Naive thymus-derived CD4-positive, alpha-beta T cell (primary cell): ENCODE measurements at regions of chr7 and their contacts with region 1.

Region 1: GRCh38 chr7:73718905-73719805 is at the start of gene STX1A:
- DNase-seq: peak; percentile 57 to 83 (median 69)
- ATAC-seq: peak; percentile 87
- H3K4me3 ChIP-seq: peak within 1 kb of the TSS; percentile 68
- H3K4me3 Mint-ChIP-seq: peak within 1 kb of the TSS; percentile 72 to 92 (median 84)
- H3K27ac ChIP-seq: peak within 1 kb of the TSS; percentile 71
- H3K27ac Mint-ChIP-seq: peak within 1 kb of the TSS in 8 of 9 donors; percentile 14 to 87 (median 81)
- H3K4me1 ChIP-seq: peaks cover 16 to 22% of the 10 kb centered on the region in 2 donors
- H3K4me1 Mint-ChIP-seq: peaks cover 8 to 32% (median 17%) of the 10 kb centered on the region in 7 donors
- H3K27me3 ChIP-seq: no peaks in the 10 kb centered on the region
- H3K27me3 Mint-ChIP-seq: peaks cover 0 to 24% (median 5%) of the 10 kb centered on the region in 5 donors
- total RNA-seq, gene STX1A: 9.6 to 13.4 (median 10.5) TPM

Region 2: DNA sequence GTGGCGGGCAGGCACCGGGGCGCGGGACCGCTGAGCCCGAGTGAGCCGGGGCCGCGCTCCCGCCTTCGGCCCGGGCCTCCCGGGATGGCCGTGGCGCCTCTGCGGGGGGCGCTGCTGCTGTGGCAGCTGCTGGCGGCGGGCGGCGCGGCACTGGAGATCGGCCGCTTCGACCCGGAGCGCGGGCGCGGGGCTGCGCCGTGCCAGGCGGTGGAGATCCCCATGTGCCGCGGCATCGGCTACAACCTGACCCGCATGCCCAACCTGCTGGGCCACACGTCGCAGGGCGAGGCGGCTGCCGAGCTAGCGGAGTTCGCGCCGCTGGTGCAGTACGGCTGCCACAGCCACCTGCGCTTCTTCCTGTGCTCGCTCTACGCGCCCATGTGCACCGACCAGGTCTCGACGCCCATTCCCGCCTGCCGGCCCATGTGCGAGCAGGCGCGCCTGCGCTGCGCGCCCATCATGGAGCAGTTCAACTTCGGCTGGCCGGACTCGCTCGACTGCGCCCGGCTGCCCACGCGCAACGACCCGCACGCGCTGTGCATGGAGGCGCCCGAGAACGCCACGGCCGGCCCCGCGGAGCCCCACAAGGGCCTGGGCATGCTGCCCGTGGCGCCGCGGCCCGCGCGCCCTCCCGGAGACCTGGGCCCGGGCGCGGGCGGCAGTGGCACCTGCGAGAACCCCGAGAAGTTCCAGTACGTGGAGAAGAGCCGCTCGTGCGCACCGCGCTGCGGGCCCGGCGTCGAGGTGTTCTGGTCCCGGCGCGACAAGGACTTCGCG is 285.0 kb before region 1 on chr7:
- CTCF ChIA-PET with region 1: no interaction called
- POLR2A ChIA-PET with region 1: no interaction called
- intact Hi-C with region 1: loop called in 1 of 2 experiments (anchors 10 kb)
- DNase-seq: peak in 1 of 9 donors; percentile 37
- ATAC-seq: peak; percentile 34
- H3K4me3 ChIP-seq: no peak overlapping the region
- H3K4me3 Mint-ChIP-seq: peak overlapping the region in 9 of 10 donors; percentile 28 to 78 (median 62)
- H3K27ac ChIP-seq: no peak overlapping the region
- H3K27ac Mint-ChIP-seq: no peak overlapping the region
- H3K4me1 ChIP-seq: no peaks in the 10 kb centered on the region
- H3K4me1 Mint-ChIP-seq: peaks cover 5 to 15% (median 10%) of the 10 kb centered on the region in 7 donors
- H3K27me3 ChIP-seq: no peaks in the 10 kb centered on the region
- H3K27me3 Mint-ChIP-seq: peaks cover 0 to 4% (median 0%) of the 10 kb centered on the region in 5 donors

Region 3: DNA sequence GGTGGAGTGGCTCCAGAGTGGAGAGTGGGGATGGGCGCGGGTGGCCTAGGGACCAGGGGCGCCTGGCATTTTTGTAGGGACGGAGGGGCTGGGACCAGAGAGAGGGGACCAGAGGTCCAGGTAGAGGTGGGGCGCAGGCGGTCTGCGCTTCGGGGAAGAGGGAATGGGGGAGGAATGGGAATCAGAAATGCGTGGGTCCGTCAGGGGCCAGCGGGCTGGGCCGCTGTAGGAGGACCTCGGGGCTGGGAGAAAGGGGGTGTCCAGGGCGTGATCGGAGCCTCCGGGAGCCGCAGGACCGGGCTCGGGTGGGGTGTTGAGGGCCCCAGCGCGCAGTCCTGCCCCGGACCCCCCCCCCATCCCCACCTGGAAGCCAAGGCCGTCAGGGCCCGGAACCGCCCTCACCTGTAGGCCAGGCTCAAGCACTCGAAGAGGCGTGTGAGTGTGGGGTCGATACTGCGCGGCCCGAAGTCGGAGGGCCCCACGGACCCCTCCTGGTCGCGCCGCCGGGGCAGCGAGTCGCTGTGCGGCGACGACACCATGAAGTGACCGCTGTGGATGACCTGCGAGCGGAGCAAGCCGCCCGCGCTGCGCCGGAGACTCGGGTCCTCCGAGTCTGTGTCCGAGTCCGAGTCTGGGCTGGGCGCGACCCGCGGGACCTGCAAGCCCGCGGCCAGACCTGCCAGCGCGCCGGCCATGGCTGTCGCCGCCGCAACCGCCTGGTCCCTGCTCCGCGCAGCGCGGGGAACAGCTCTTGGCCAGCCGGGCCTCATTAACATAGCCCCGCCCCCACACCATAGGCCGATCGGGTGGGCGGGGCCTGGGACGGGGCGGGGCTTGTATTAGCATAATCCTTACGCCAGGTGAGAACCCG is 95.1 kb before region 1 on chr7 and contains the start of gene MLXIPL:
- CTCF ChIA-PET with region 1: no interaction called
- POLR2A ChIA-PET with region 1: no interaction called
- intact Hi-C with region 1: loop called in 1 of 2 experiments (anchors 5 kb)
- DNase-seq: peak in 7 of 9 donors; percentile 16 to 68 (median 30)
- ATAC-seq: peak; percentile 89
- H3K4me3 ChIP-seq: no peak within 1 kb of the TSS
- H3K4me3 Mint-ChIP-seq: peak within 1 kb of the TSS; percentile 25 to 78 (median 60)
- H3K27ac ChIP-seq: no peak within 1 kb of the TSS
- H3K27ac Mint-ChIP-seq: peak within 1 kb of the TSS in 1 of 9 donors; percentile 50
- H3K4me1 ChIP-seq: no peaks in the 10 kb centered on the region
- H3K4me1 Mint-ChIP-seq: peaks cover 0 to 9% (median 5%) of the 10 kb centered on the region in 7 donors
- H3K27me3 ChIP-seq: peaks cover 0 to 10% of the 10 kb centered on the region in 2 donors
- H3K27me3 Mint-ChIP-seq: peaks cover 38 to 74% (median 44%) of the 10 kb centered on the region in 5 donors
- total RNA-seq, gene MLXIPL: not detected

Region 4: DNA sequence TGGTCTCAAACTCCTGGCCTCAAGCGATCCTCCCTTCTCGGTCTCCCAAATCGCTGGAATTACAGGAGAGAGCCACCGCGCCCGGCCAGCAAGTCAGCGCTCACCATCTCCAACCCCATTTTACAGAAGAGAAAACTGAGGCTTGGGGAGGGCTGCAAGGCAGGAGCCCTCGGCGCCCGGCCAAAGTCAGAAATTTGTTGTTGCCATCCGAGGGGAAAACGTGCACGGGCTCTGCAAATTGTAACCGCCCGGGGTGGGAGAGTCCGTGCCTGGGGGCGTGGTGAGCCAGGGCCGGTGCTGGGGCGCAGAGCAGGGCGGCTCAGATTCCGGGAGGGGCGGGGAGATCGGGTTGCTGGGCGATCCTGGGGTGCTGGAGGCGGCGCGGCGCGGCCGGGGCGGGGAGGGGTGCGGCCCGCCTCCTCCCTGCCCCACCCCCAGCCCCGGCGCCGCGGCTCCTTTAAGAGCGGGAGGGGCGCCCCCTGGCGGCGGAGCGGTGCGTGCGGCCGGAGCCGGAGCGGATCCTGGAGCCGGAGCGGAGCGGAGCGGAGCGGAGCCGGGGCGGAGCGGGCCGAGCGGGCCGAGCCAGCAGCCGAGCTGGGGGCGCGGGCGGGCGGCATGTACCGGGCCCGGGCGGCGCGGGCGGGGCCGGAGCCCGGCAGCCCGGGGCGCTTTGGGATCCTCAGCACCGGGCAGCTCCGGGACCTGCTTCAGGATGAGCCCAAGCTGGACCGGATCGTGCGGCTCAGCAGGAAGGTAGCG is 51.6 kb before region 1 on chr7 and contains the start of gene VPS37D:
- CTCF ChIA-PET with region 1: no interaction called
- POLR2A ChIA-PET with region 1: no interaction called
- intact Hi-C with region 1: loop called (anchors 1 kb)
- DNase-seq: peak; percentile 84 to 99 (median 93)
- ATAC-seq: peak; percentile 98
- H3K4me3 ChIP-seq: peak within 1 kb of the TSS; percentile 44
- H3K4me3 Mint-ChIP-seq: peak within 1 kb of the TSS; percentile 61 to 84 (median 76)
- H3K27ac ChIP-seq: no peak within 1 kb of the TSS
- H3K27ac Mint-ChIP-seq: peak within 1 kb of the TSS in 5 of 9 donors; percentile 22 to 67 (median 49)
- H3K4me1 ChIP-seq: peaks cover 5 to 6% of the 10 kb centered on the region in 2 donors
- H3K4me1 Mint-ChIP-seq: peaks cover 0 to 15% (median 8%) of the 10 kb centered on the region in 7 donors
- H3K27me3 ChIP-seq: no peaks in the 10 kb centered on the region
- H3K27me3 Mint-ChIP-seq: peaks cover 27 to 58% (median 33%) of the 10 kb centered on the region in 5 donors
- total RNA-seq, gene VPS37D: 0.22 to 0.85 (median 0.44) TPM in 3 of 5 experiments, not detected in the others

Region 5: GRCh38 chr7:73683056-73683964 is 35.8 kb before region 1 on chr7 and contains the starts of genes BUD23 and DNAJC30:
- CTCF ChIA-PET with region 1: no interaction called
- POLR2A ChIA-PET with region 1: no interaction called
- intact Hi-C with region 1: loop called (anchors 1 to 2 kb)
- DNase-seq: peak; percentile 77 to 97 (median 88)
- ATAC-seq: peak; percentile 98
- H3K4me3 ChIP-seq: peak within 1 kb of the TSS; percentile 97
- H3K4me3 Mint-ChIP-seq: peak within 1 kb of the TSS; percentile 91 to 98 (median 96)
- H3K27ac ChIP-seq: peak within 1 kb of the TSS; percentile 91
- H3K27ac Mint-ChIP-seq: peak within 1 kb of the TSS; percentile 91 to 97 (median 95)
- H3K4me1 ChIP-seq: peaks cover 17% of the 10 kb centered on the region in 2 donors
- H3K4me1 Mint-ChIP-seq: peaks cover 17 to 62% (median 42%) of the 10 kb centered on the region in 7 donors
- H3K27me3 ChIP-seq: no peaks in the 10 kb centered on the region
- H3K27me3 Mint-ChIP-seq: no peaks in the 10 kb centered on the region
- total RNA-seq, gene BUD23: 50.5 to 107 (median 72.0) TPM
- total RNA-seq, gene DNAJC30: 9.5 to 22.4 (median 13.4) TPM

Region 6: GRCh38 chr7:73703757-73704639 is 15.2 kb before region 1 on chr7:
- CTCF ChIA-PET with region 1: interaction called, 3 read pairs
- POLR2A ChIA-PET with region 1: interaction called, 3 read pairs
- intact Hi-C with region 1: loop called (anchors 1 kb)
- DNase-seq: peak in 6 of 9 donors; percentile 29 to 54 (median 42)
- ATAC-seq: peak; percentile 63
- H3K4me3 ChIP-seq: no peak overlapping the region
- H3K4me3 Mint-ChIP-seq: peak overlapping the region in 7 of 10 donors; percentile 16 to 53 (median 49)
- H3K27ac ChIP-seq: no peak overlapping the region
- H3K27ac Mint-ChIP-seq: no peak overlapping the region
- H3K4me1 ChIP-seq: no peaks in the 10 kb centered on the region
- H3K4me1 Mint-ChIP-seq: peaks cover 4 to 14% (median 8%) of the 10 kb centered on the region in 7 donors
- H3K27me3 ChIP-seq: no peaks in the 10 kb centered on the region
- H3K27me3 Mint-ChIP-seq: no peaks in the 10 kb centered on the region

Region 7: GRCh38 chr7:73978661-73979563 is 259.8 kb after region 1 on chr7:
- CTCF ChIA-PET with region 1: no interaction called
- POLR2A ChIA-PET with region 1: no interaction called
- intact Hi-C with region 1: no loop called
- DNase-seq: no peak
- ATAC-seq: peak; percentile 32
- H3K4me3 ChIP-seq: no peak overlapping the region
- H3K4me3 Mint-ChIP-seq: no peak overlapping the region
- H3K27ac ChIP-seq: no peak overlapping the region
- H3K27ac Mint-ChIP-seq: no peak overlapping the region
- H3K4me1 ChIP-seq: no peaks in the 10 kb centered on the region
- H3K4me1 Mint-ChIP-seq: peaks cover 0 to 7% (median 0%) of the 10 kb centered on the region in 7 donors
- H3K27me3 ChIP-seq: no peaks in the 10 kb centered on the region
- H3K27me3 Mint-ChIP-seq: peaks cover 0 to 12% (median 5%) of the 10 kb centered on the region in 5 donors